ENCODE measurements at regions of chr4 and their contacts with region 1.

Region 1: GRCh38 chr4:152460488-152460887 is 75.4 kb downstream of the FBXW7 start:
- DNase-seq: peak; percentile 43
- ATAC-seq: peak; percentile 32
- H3K4me3 ChIP-seq: no peak overlapping the region
- H3K27ac ChIP-seq: peak overlapping the region; percentile 73
- H3K4me1 ChIP-seq: peaks cover 54% of the 10 kb centered on the region
- H3K27me3 ChIP-seq: no peaks in the 10 kb centered on the region
- CTCF ChIP-seq: peak; percentile 9 to 57 (median 38); a peak in 4 of 6 replicates
- EP300 ChIP-seq: no peak
- POLR2A ChIP-seq: no peak
- RAD21 ChIP-seq: peak; percentile 68

Region 2: GRCh38 chr4:152448038-152448707 is 12.3 kb before region 1 on chr4:
- CTCF ChIA-PET with region 1: interaction called, 11 read pairs
- POLR2A ChIA-PET with region 1: no interaction called
- RAD21 ChIA-PET with region 1: interaction called, 3 read pairs
- SMC1A ChIA-PET with region 1: interaction called, 21 read pairs
- in situ Hi-C with region 1: no loop called
- intact Hi-C with region 1: no loop called
- DNase-seq: no peak
- ATAC-seq: no peak
- H3K4me3 ChIP-seq: no peak overlapping the region
- H3K27ac ChIP-seq: no peak overlapping the region
- H3K4me1 ChIP-seq: no peaks in the 10 kb centered on the region
- H3K27me3 ChIP-seq: no peaks in the 10 kb centered on the region
- CTCF ChIP-seq: no peak
- EP300 ChIP-seq: no peak
- POLR2A ChIP-seq: no peak
- RAD21 ChIP-seq: no peak

Region 3: DNA sequence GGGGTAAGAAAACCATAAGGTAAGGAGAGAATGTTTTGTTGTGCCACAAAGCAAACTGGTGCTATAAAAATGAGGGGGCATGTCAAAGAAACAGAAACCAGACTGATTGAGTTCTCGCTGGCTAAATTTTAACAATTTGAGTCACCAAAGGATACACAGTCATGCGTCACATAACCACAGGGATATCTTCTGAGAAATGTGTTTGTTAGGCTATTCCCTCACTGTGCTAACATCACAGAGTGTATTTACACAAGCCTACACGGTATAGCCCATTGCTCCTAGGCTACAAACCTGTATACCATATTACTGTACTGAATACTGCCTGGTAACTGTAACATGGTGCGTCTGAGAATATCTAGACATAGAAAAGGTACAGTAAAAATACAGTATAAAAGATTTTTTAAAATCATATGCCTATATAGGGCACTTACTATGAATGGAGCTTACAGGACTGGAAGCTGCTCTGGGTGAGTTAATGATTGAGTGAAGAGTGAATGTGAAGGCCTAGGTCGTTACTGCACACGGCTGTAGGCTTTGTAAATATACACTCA is 25.3 kb after region 1 on chr4:
- CTCF ChIA-PET with region 1: interaction called, 17 read pairs
- POLR2A ChIA-PET with region 1: interaction called, 3 read pairs
- RAD21 ChIA-PET with region 1: interaction called, 5 read pairs
- SMC1A ChIA-PET with region 1: interaction called, 14 read pairs
- in situ Hi-C with region 1: no loop called
- intact Hi-C with region 1: loop called (anchors 2 kb)
- DNase-seq: peak; percentile 86
- ATAC-seq: peak; percentile 98
- H3K4me3 ChIP-seq: no peak overlapping the region
- H3K27ac ChIP-seq: peak overlapping the region; percentile 58
- H3K4me1 ChIP-seq: peaks cover 7% of the 10 kb centered on the region
- H3K27me3 ChIP-seq: no peaks in the 10 kb centered on the region
- CTCF ChIP-seq: no peak
- EP300 ChIP-seq: peak; percentile 85 to 87; a peak in 3 of 4 replicates
- POLR2A ChIP-seq: no peak
- RAD21 ChIP-seq: no peak

Measured in GM12878 (cell line).